Spleen (tissue), 13 donors: ENCODE measurements at regions of chr12 and their contacts with region 1.

Region 1: GRCh38 chr12:102484428-102484958 is 4.1 kb upstream of the IGF1 start:
- DNase-seq: no peak
- H3K4me3 ChIP-seq: peak overlapping the region in 4 of 8 donors; percentile 12 to 54 (median 26)
- H3K27ac ChIP-seq: peak overlapping the region in 7 of 8 donors; percentile 55 to 81 (median 73)
- H3K4me1 ChIP-seq: peaks cover 15 to 40% (median 32%) of the 10 kb centered on the region in 6 donors
- H3K27me3 ChIP-seq: no peaks in the 10 kb centered on the region
- CTCF ChIP-seq: peak; percentile 69 to 91 (median 80)
- POLR2A ChIP-seq: no peak

Region 2: GRCh38 chr12:101939856-101940265 is 544.6 kb before region 1 on chr12:
- intact Hi-C with region 1: loop called (anchors 10 kb)
- DNase-seq: no peak
- H3K4me3 ChIP-seq: no peak overlapping the region
- H3K27ac ChIP-seq: no peak overlapping the region
- H3K4me1 ChIP-seq: peaks cover 4 to 53% (median 38%) of the 10 kb centered on the region in 6 donors
- H3K27me3 ChIP-seq: no peaks in the 10 kb centered on the region
- CTCF ChIP-seq: peak; percentile 37 to 72 (median 70)
- POLR2A ChIP-seq: no peak

Region 3: DNA sequence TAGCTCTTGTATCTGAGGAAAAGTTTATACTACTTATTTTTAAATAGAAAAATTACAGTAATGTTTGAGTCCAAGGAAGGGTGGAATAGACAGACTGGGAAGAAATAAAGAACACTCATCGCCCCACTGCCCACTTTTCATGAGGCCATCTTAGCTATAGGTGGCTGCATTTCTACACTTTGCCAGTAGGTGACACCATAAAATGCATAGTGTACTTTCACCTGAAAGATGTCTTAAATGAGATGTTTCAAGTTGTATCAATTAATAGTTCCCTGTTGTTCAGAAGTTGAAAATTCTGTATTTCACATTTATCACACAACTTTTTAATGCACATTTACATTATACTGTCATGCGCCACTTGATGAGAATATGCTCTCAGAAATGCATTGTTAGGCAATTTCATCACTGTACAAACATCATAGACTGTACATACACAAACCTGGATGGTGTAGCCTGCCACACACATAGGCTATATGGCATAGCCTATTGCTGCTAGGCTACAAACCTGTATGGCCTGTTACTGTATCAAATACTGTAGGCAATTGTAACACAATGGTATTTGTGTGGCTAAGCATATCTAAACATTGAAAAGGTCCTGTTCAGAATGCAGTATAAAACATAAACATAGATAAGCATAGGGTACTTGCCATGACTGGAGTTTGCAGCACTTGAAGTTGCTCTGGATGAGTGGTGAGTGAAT is 314.4 kb before region 1 on chr12:
- intact Hi-C with region 1: loop called (anchors 5 kb)
- DNase-seq: no peak
- H3K4me3 ChIP-seq: no peak overlapping the region
- H3K27ac ChIP-seq: no peak overlapping the region
- H3K4me1 ChIP-seq: no peaks in the 10 kb centered on the region
- H3K27me3 ChIP-seq: no peaks in the 10 kb centered on the region
- CTCF ChIP-seq: peak; percentile 38 to 73 (median 67)
- POLR2A ChIP-seq: no peak

Region 4: DNA sequence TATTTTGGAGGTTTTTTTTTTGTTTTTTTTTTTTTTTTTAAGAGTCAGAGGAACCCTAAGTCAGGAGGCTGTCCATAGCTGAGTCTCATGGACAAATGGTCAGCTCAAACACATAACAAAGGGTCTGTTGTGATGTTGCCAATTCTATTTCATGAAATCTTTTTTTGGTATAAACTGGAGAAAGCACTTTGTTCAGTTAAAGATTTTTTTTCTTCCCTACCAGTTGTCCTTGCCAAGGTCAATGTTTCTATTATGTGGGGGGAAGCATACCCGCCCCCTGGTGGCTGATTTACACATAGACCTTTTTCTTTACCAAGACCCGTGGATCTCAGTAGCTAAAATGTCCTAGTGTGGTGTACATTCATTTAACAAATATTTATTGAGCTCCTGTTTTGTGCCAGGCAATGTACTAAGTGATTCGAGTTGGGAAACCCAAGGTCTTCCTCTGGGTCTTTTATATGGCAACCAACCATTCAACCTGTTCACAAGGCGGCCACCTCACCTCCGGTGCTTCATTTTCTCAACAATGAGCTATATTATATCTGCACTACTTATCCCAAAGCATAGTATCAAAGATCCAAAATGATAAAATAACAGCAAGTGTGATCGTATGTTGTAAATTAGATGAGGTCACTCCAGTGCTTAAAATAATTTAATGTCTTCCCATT is 218.1 kb after region 1 on chr12:
- intact Hi-C with region 1: no loop called
- DNase-seq: no peak
- H3K4me3 ChIP-seq: no peak overlapping the region
- H3K27ac ChIP-seq: no peak overlapping the region
- H3K4me1 ChIP-seq: no peaks in the 10 kb centered on the region
- H3K27me3 ChIP-seq: peaks cover 0 to 8% (median 0%) of the 10 kb centered on the region in 7 donors
- CTCF ChIP-seq: peak in 10 of 11 experiments; percentile 38 to 69 (median 55)
- POLR2A ChIP-seq: no peak